KBM-7 (cell line): ENCODE measurements at regions of chr4 and their contacts with region 1.

Region 1: DNA sequence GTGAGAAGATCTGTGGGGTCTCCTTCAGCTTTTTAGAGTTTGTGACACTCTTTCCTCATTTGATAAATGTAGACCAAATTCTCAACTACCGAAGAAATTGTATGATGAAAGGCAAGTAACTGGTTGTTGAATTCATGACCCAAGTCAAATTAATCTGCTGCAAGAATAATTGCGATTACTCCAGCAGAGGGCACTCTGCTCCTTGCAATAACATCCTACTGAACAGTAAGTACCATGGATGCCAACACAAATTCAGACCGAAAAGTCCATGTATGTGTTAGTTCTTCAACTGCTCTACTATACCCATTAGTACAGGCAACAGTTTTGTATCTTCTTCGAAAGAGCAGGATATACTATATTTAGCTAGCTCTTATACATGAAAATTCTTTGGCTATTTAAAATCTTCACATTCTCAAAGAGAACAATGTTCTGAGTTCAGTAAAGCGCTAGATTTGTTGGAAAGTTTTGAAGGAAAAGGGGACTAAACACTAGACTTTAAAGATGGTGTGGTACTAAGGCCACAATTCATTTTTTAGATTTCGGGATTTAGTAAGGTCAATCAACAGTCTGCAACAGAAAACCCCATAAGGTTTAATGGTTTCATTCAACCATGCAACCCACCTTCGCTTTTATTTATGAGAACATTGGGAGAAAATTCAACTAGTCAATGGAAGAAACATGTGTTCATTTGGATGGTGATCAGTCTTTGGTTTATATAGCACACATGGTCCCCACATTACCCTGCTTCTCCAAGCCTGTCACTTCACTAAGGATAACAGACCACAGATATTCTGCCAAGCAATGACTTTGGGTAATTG is 105.4 kb upstream of the TBC1D9 start:
- DNase-seq: peak; percentile 78

Region 2: DNA sequence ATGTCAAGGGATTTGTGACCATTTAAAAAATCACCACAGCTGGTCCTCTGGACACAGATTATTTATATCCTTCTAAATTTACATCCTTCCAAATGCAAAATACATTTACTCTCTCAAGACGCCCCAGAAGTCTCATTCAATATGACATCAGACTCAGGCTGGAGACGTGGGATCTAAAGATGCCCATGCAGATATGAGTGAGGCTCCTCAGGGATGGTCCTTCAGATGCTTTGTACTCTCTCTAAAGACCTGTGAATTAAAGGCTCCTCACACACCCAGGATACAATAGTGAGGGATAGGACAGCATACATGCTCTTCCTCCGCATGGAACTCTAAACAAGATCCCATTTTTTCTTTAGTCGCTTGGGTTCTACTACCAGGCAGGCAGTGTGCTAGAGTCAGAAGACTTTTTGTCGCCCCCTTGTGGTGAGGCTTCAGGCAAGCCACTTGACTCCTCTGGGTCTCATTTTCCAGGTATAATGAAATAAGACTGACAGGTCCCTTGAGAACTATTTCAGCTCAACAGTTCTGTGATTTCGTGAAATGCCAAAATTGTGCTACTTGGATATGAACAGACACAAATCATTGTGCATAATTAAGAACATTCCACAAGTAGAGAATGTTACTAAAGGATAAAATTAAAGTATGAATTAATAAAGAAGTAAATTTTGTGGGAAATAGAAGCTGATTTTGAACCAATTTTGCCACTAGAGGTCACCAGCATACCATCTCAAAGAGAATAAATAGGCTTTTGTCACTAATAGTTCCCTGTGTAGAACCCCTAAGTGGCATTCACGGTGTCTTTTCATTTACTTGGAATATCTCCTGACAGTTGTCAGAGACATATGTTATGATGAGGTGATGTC is 501.8 kb before region 1 on chr4:
- in situ Hi-C with region 1: loop called (anchors 25 kb)
- DNase-seq: peak; percentile 91

Region 3: GRCh38 chr4:141133146-141133998 is 271.8 kb after region 1 on chr4 and contains the start of gene RNF150:
- in situ Hi-C with region 1: loop called (anchors 25 kb)
- DNase-seq: peak; percentile 91